Adrenal gland (tissue), 19 donors: ENCODE measurements at regions of chr1 and their contacts with region 1.

Region 1: GRCh38 chr1:39973503-39974135 is 18.7 kb downstream of the MFSD2A start:
- DNase-seq: peak; percentile 65 to 90 (median 77)
- H3K4me3 ChIP-seq: no peak overlapping the region
- H3K27ac ChIP-seq: no peak overlapping the region
- H3K4me1 ChIP-seq: no peaks in the 10 kb centered on the region
- H3K27me3 ChIP-seq: no peaks in the 10 kb centered on the region
- CTCF ChIP-seq: peak; percentile 95 to 98 (median 96)
- POLR2A ChIP-seq: no peak

Region 2: GRCh38 chr1:39816415-39817090 is 157.1 kb before region 1 on chr1:
- intact Hi-C with region 1: loop called (anchors 2 to 5 kb)
- DNase-seq: peak; percentile 35 to 88 (median 76)
- H3K4me3 ChIP-seq: no peak overlapping the region
- H3K27ac ChIP-seq: no peak overlapping the region
- H3K4me1 ChIP-seq: no peaks in the 10 kb centered on the region
- H3K27me3 ChIP-seq: no peaks in the 10 kb centered on the region
- CTCF ChIP-seq: peak; percentile 73 to 96 (median 92)
- POLR2A ChIP-seq: no peak

Region 3: GRCh38 chr1:39898648-39899603 is 74.7 kb before region 1 on chr1:
- intact Hi-C with region 1: no loop called
- DNase-seq: peak in 1 of 7 donors; percentile 26
- H3K4me3 ChIP-seq: no peak overlapping the region
- H3K27ac ChIP-seq: no peak overlapping the region
- H3K4me1 ChIP-seq: peaks cover 11 to 19% of the 10 kb centered on the region in 2 donors
- H3K27me3 ChIP-seq: peaks cover 22% of the 10 kb centered on the region
- CTCF ChIP-seq: no peak
- POLR2A ChIP-seq: no peak

Region 4: DNA sequence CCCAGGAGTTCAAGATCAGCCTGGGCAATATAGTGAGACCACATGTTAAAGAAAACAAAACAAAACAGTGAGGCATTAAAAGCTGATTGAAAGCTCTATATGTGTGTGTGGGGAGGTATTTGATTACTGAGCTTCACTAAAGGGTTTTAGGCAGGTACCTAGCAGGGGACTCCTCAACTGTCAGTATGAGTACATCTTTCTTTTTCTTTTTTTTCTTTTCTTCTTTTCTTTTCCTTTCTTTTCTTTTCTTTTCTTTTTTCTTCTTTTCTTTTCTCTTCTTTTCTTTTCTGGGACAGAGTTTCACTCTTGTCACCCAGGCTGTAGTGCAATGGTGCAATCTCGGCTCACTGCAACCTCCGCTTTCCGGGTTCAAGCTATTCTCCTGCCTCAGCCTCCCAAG is 63.4 kb before region 1 on chr1:
- intact Hi-C with region 1: no loop called
- DNase-seq: no peak
- H3K4me3 ChIP-seq: no peak overlapping the region
- H3K27ac ChIP-seq: no peak overlapping the region
- H3K4me1 ChIP-seq: no peaks in the 10 kb centered on the region
- H3K27me3 ChIP-seq: peaks cover 7% of the 10 kb centered on the region
- CTCF ChIP-seq: no peak
- POLR2A ChIP-seq: no peak

Region 5: GRCh38 chr1:39922251-39922688 is 51.3 kb before region 1 on chr1:
- intact Hi-C with region 1: loop called in 1 of 2 experiments (anchors 5 kb)
- DNase-seq: no peak
- H3K4me3 ChIP-seq: no peak overlapping the region
- H3K27ac ChIP-seq: no peak overlapping the region
- H3K4me1 ChIP-seq: no peaks in the 10 kb centered on the region
- H3K27me3 ChIP-seq: peaks cover 4% of the 10 kb centered on the region
- CTCF ChIP-seq: no peak
- POLR2A ChIP-seq: no peak